ENCODE measurements at regions of chr2 and their contacts with region 1.

Region 1: DNA sequence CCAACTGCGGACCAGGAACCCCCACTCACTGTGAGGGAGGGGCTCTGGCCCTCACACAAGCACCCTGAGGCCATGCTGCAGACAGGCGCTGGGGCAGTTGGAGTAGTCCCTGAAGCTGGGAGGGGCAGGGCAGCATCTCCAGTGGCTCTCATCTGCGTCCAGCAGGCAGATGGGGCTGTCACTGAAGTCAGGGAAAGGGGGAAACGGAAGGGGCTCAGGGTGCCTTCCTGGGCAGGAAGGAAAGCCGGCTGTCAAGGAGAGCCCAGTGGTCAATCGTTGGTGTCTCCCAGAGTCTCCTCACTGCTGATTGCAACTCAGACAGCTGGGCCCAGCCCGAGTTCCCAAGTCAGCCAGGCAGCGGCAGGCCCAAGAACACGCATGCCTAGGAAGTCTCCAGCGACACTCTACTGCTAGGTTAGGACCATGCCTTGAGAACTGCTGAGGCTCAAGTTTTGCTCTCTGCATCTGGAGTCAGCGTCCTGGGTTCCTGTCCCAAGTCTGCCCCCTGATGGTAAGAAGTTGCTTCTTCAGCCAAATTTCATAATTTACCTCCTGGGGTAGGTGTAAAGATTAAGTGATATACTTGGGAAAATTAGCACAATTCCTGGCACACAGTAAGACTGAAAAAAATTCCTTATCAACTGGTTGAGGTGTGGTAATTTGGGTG is 27.5 kb upstream of the NMUR1 start:
- DNase-seq: peak; percentile 72 to 83
- ATAC-seq: peak; percentile 86 to 92
- H3K4me3 ChIP-seq: no peak overlapping the region
- H3K27ac ChIP-seq: no peak overlapping the region
- H3K4me1 ChIP-seq: no peaks in the 10 kb centered on the region
- CTCF ChIP-seq: peak; percentile 76
- EP300 ChIP-seq: no peak
- POLR2A ChIP-seq: no peak
- RAD21 ChIP-seq: peak; percentile 78 to 87

Region 2: DNA sequence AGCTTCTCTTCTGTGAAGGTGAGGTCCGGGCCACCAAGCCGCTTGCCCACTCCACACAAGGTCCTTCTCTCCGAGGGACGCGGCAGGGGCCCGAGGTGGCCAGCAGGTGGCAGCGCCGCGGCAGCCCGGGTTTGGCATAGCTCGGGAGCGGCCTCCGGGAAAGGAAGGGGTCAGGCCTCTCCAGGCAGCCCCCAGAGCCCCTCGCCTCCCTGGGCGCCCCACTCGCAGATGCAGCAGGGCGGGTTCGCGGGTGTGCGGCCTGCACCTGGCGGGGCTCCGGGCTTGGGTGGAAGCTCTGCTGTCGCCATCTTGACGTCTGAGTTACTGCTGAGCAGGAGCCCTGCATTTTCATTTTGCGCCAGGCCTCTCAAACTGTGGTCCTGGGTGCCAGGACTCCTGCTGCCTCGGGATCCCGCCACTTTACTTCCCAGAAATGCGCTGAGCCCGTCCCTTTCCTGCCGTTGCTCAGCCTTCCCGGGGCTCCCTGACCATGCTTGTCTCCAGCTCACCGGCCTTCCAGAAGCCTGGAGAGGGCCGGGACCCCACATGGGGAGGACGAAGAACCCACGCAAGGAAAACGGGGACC is 74.8 kb before region 1 on chr2:
- CTCF ChIA-PET with region 1: interaction called, 19 read pairs
- POLR2A ChIA-PET with region 1: no interaction called
- DNase-seq: peak; percentile 69 to 87
- ATAC-seq: peak; percentile 98 to 99
- H3K4me3 ChIP-seq: peak overlapping the region; percentile 27
- H3K27ac ChIP-seq: peak overlapping the region; percentile 70 to 96
- H3K4me1 ChIP-seq: peaks cover 4% of the 10 kb centered on the region; the same call in 1 of the 3 replicates
- CTCF ChIP-seq: peak; percentile 86
- EP300 ChIP-seq: no peak
- POLR2A ChIP-seq: no peak
- RAD21 ChIP-seq: peak; percentile 47 to 54

Region 3: GRCh38 chr2:231514103-231514950 is 43.4 kb before region 1 on chr2:
- CTCF ChIA-PET with region 1: interaction called, 10 read pairs
- POLR2A ChIA-PET with region 1: no interaction called
- DNase-seq: peak; percentile 98
- ATAC-seq: peak; percentile 99 to 100
- H3K4me3 ChIP-seq: peak overlapping the region; percentile 65
- H3K27ac ChIP-seq: peak overlapping the region; percentile 84 to 92
- H3K4me1 ChIP-seq: peaks cover 11% of the 10 kb centered on the region; the same call in 2 of the 3 replicates
- CTCF ChIP-seq: no peak
- EP300 ChIP-seq: no peak
- POLR2A ChIP-seq: peak; percentile 91
- RAD21 ChIP-seq: no peak

Region 4: GRCh38 chr2:231523451-231524285 is 34.0 kb before region 1 on chr2:
- CTCF ChIA-PET with region 1: interaction called, 14 read pairs
- POLR2A ChIA-PET with region 1: no interaction called
- DNase-seq: no peak
- ATAC-seq: no peak
- H3K4me3 ChIP-seq: no peak overlapping the region
- H3K27ac ChIP-seq: no peak overlapping the region
- H3K4me1 ChIP-seq: 0 out of 3 replicates have a peak, but pooled peaks cover 2% of the 10 kb centered on the region
- CTCF ChIP-seq: no peak
- EP300 ChIP-seq: no peak
- POLR2A ChIP-seq: no peak
- RAD21 ChIP-seq: no peak

Region 5: DNA sequence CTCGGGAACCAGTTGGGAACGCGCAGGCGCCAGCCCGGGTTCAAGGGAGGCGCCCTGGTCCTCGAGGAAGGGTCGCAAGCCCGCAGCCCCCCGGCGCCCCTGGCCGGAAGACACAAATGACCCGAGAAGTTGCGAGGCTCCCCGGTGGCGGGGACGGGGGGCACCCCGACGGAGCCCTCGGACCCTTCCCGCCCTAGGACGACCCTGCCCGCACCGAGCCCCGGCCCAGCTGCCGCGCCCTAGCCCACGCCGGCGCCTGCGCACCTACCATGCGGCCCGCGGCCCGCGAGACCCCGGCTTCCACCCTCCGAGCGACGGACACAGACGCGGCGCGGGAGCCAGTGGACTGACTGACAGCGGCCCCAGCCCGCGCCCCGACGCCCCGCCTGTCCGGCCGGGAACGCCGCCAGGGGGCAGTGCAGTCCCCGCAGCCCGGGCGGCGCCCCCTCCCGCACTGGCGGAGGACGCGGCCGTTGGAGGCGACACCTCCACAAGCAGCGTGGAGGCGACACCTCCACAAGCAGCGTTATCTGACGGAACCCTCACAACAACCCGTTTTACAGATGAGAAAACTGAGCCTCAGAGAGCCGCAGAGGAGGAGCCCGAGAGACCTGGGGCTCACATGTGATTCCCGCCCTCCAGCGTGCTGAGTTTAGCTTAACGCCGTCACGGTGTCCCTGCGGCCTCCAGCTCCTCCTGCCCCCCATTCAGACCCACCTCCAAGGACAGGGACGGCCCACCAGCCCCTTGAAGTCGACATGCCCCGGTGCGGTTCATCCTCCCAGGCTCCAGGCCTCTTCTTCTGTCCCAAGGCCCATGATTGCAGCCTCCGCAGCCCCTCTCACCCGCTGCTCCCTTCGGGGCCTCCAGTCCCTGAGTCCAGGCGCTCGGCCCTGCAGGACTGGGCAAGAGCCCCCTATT is 27.4 kb before region 1 on chr2 and contains the start of gene NMUR1:
- CTCF ChIA-PET with region 1: interaction called, 14 read pairs
- POLR2A ChIA-PET with region 1: no interaction called
- DNase-seq: peak; percentile 48 to 52
- ATAC-seq: peak; percentile 62 to 90
- H3K4me3 ChIP-seq: peak within 1 kb of the TSS; percentile 44
- H3K27ac ChIP-seq: peak within 1 kb of the TSS; percentile 30 to 82; a peak in 4 of 6 replicates
- H3K4me1 ChIP-seq: peaks cover 4% of the 10 kb centered on the region; the same call in 1 of the 3 replicates
- CTCF ChIP-seq: peak; percentile 90
- EP300 ChIP-seq: no peak
- POLR2A ChIP-seq: no peak
- RAD21 ChIP-seq: peak; percentile 20 to 57; a peak in 4 of 5 replicates
- polyA plus RNA-seq, gene NMUR1: 0.05 TPM in 1 of 2 replicates, not detected in the other